ENCODE measurements at regions of chr14 and their contacts with region 1.

Region 1: GRCh38 chr14:51283402-51284085 is 43.5 kb downstream of the TMX1 start:
- DNase-seq: peak; percentile 16 to 76
- H3K4me3 ChIP-seq: no peak overlapping the region
- H3K27ac ChIP-seq: no peak overlapping the region
- H3K4me1 ChIP-seq: no peaks in the 10 kb centered on the region
- H3K27me3 ChIP-seq: no peaks in the 10 kb centered on the region
- CTCF ChIP-seq: peak; percentile 91

Region 2: DNA sequence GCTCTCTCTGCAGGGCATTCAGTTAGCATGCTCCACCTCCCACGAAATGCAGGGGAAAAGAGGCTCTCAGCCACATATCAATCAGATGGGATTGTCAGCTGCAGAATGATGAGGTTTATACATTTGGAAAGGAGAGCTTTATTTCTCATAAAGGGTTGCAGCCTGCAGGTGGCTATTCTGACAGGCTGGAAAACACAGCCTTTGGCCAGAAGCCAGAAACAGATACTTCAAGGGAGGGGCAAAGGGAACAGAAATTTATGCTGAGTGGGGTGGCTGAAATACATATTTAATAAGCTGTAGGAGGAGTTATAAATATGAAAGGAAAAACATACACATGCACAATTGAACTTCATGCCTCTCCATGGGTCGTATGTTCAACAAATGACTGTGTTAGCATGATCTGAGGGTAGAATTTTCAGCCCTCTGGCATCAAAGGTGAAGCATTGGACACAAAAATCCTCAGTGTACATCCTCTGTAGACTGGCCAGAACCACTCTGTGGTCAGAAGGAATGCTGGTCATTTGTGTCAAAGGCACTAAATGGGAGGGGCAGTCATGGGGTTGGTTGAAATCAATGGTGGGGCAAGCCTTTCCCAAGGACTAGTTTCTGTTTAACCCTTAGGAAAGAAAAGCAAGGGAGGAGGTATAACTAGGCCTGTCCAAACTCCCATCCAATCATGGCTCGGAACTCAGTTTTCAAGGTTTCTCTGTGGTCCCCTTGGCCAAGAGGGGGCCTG is 18.9 kb after region 1 on chr14:
- CTCF ChIA-PET with region 1: no interaction called
- POLR2A ChIA-PET with region 1: no interaction called
- intact Hi-C with region 1: loop called (anchors 1 kb)
- DNase-seq: peak; percentile 34 to 62
- H3K4me3 ChIP-seq: no peak overlapping the region
- H3K27ac ChIP-seq: peak overlapping the region; percentile 78
- H3K4me1 ChIP-seq: peaks cover 38% of the 10 kb centered on the region
- H3K27me3 ChIP-seq: no peaks in the 10 kb centered on the region
- CTCF ChIP-seq: no peak

Region 3: DNA sequence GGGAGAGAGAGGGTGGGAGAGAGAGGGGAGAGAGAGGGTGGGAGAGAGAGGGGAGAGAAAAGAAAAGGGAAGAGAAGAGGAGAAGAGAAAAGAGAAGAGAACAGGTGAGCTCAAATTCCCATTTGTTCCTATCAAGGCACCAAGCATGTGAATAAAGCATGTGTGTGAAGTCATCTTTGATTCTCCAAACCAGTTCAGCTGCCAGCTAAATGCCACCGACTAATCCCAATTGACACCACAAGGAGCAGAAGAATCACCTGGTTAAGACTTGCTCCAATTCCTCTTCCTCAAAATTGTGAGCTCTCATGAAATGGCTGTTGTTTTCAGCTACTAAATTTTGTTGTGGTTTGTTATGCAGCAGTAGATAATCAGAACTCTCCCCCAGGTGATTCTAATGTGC is 145.4 kb after region 1 on chr14:
- CTCF ChIA-PET with region 1: interaction called, 3 read pairs
- POLR2A ChIA-PET with region 1: interaction called, 18 read pairs
- intact Hi-C with region 1: no loop called
- DNase-seq: no peak
- H3K4me3 ChIP-seq: no peak overlapping the region
- H3K27ac ChIP-seq: no peak overlapping the region
- H3K4me1 ChIP-seq: no peaks in the 10 kb centered on the region
- H3K27me3 ChIP-seq: no peaks in the 10 kb centered on the region
- CTCF ChIP-seq: no peak

Region 4: GRCh38 chr14:51554953-51555352 is 271.4 kb after region 1 on chr14:
- CTCF ChIA-PET with region 1: interaction called, 4 read pairs
- POLR2A ChIA-PET with region 1: no interaction called
- intact Hi-C with region 1: loop called (anchors 2 kb)
- DNase-seq: no peak
- H3K4me3 ChIP-seq: no peak overlapping the region; the same call in 1 of the 2 replicates
- H3K27ac ChIP-seq: peak overlapping the region; percentile 70
- H3K4me1 ChIP-seq: peaks cover 30% of the 10 kb centered on the region
- H3K27me3 ChIP-seq: no peaks in the 10 kb centered on the region
- CTCF ChIP-seq: no peak; the same call in 1 of the 2 replicates

Region 5: DNA sequence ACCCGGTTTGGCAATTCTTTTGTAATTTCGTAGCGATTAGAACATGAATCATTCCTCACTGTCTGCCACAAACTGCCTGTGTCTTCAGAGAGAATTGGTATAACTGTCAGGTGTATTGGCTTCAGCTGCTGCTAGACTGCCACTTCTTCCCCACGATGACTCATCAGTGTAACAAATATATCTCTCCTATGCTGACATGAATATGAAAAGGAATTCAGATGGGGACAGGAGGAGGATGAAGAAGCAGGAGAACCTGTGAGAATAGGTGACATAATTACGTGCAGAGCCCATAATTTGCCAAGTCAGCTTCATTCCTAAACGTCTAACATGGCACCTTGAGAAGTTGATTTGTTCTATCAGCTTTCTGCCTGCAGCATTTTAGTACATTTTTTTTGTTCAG is 433.1 kb after region 1 on chr14:
- CTCF ChIA-PET with region 1: no interaction called
- POLR2A ChIA-PET with region 1: no interaction called
- intact Hi-C with region 1: loop called (anchors 5 kb)
- DNase-seq: no peak
- H3K4me3 ChIP-seq: no peak overlapping the region
- H3K27ac ChIP-seq: no peak overlapping the region
- H3K4me1 ChIP-seq: no peaks in the 10 kb centered on the region
- H3K27me3 ChIP-seq: no peaks in the 10 kb centered on the region
- CTCF ChIP-seq: no peak

Region 6: GRCh38 chr14:51979088-51979709 is 695.7 kb after region 1 on chr14:
- CTCF ChIA-PET with region 1: no interaction called
- POLR2A ChIA-PET with region 1: no interaction called
- intact Hi-C with region 1: loop called (anchors 1 kb)
- DNase-seq: peak in 1 of 2 experiments; percentile 68
- H3K4me3 ChIP-seq: no peak overlapping the region
- H3K27ac ChIP-seq: no peak overlapping the region
- H3K4me1 ChIP-seq: no peaks in the 10 kb centered on the region
- H3K27me3 ChIP-seq: no peaks in the 10 kb centered on the region
- CTCF ChIP-seq: peak; percentile 94

Region 7: DNA sequence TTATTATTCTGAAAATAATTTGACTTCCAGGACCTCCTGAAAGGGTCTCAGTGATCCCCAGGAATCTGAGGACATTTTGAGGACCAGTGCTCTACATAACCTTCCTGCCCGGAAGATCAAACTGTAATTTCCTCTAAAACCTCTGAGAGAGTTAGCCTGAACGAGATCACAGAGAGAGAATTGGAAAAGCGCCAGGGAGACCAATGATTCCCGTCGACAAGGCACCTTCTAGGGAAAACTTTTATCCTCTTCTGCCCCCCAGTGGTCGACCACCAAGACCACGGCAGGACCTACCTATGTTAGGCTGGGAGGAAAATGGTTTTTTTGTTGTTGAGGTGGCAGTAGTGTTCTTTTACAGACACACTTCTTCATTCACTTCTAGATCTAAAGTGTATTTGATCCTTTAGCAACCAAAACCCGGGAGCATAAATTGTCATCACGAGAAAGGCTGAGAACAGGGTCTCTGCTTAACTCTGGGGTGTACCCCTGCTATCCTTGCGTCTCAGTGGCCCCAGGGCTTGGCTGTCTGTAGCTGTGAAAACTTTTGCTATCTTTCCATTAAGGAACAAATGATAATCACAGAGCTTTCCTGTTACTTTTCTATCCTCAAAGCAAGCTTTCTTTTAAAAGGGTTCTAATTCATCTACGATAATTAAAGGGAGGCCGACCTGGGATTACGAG is 848.2 kb after region 1 on chr14:
- CTCF ChIA-PET with region 1: no interaction called
- POLR2A ChIA-PET with region 1: no interaction called
- intact Hi-C with region 1: loop called (anchors 1 kb)
- DNase-seq: peak; percentile 52 to 78
- H3K4me3 ChIP-seq: no peak overlapping the region
- H3K27ac ChIP-seq: no peak overlapping the region
- H3K4me1 ChIP-seq: no peaks in the 10 kb centered on the region; the same call in 1 of the 2 replicates
- H3K27me3 ChIP-seq: no peaks in the 10 kb centered on the region
- CTCF ChIP-seq: peak; percentile 75